B cell (primary cell): ENCODE measurements at regions of chr4 and their contacts with region 1.

Region 1: DNA sequence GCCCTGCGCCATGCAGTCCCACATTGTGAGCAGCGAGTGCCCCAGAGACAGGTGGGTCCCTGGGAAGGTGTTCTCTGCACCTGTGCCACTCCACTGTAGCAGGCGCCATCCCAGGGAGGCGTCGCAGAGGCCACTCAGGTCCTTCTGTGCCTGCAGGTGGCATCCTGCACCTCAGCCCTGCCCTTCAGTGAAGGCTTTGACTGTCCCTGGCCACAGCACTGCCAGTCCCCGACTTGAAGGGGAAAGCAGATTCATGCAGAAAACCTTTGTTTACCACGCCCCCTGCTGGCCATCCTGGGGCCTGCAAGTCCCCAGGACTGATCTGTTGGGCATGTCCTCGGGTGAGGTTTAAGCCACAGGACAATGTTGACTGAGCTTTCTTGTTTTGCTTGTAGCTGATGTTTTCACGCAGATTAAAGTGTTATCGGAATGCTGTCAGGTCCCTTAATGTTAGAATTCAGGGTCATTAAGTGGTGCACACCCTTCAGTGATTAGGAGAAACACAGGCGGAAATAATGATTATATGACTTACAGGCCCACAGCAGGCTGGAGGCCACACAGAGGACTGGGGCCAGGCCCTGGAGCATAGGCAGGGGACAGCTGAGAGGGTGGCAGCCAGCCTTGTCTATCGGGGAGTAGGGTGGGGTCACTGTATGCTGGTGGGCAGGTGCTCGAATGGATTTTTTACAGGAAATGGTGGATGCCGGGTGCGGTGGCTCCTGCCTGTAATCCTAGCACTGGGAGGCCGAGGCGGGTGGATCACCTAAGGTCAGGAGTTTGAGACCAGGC is 5.0 kb downstream of the TACC3 start:
- DNase-seq: peak; percentile 89
- ATAC-seq: peak; percentile 25
- H3K4me3 ChIP-seq: no peak overlapping the region
- H3K4me3 Mint-ChIP-seq: peak overlapping the region; percentile 53
- H3K27ac ChIP-seq: peak overlapping the region in 1 of 2 donors; percentile 57
- H3K27ac Mint-ChIP-seq: peak overlapping the region; percentile 79
- H3K4me1 ChIP-seq: peaks cover 45 to 51% of the 10 kb centered on the region in 2 donors
- H3K4me1 Mint-ChIP-seq: peaks cover 40% of the 10 kb centered on the region
- H3K27me3 ChIP-seq: no peaks in the 10 kb centered on the region
- H3K27me3 Mint-ChIP-seq: no peaks in the 10 kb centered on the region
- CTCF ChIP-seq: peak; percentile 90

Region 2: GRCh38 chr4:1712216-1713002 is 13.9 kb before region 1 on chr4 and contains the start of gene SLBP:
- CTCF ChIA-PET with region 1: interaction called, 16 read pairs
- POLR2A ChIA-PET with region 1: interaction called, 61 read pairs
- intact Hi-C with region 1: loop called (anchors 1 kb)
- DNase-seq: peak; percentile 99
- ATAC-seq: peak; percentile 86
- H3K4me3 ChIP-seq: peak within 1 kb of the TSS; percentile 78 to 100 (median 96)
- H3K4me3 Mint-ChIP-seq: peak within 1 kb of the TSS; percentile 91
- H3K27ac ChIP-seq: peak within 1 kb of the TSS; percentile 83 to 99
- H3K27ac Mint-ChIP-seq: peak within 1 kb of the TSS; percentile 98
- H3K4me1 ChIP-seq: peaks cover 52 to 60% of the 10 kb centered on the region in 2 donors
- H3K4me1 Mint-ChIP-seq: peaks cover 66% of the 10 kb centered on the region
- H3K27me3 ChIP-seq: no peaks in the 10 kb centered on the region
- H3K27me3 Mint-ChIP-seq: no peaks in the 10 kb centered on the region
- CTCF ChIP-seq: no peak
- total RNA-seq, gene SLBP: 31.8 and 33.9 TPM in 2 replicates